Activated naive CD4-positive, alpha-beta T cell treated with anti-CD3 and anti-CD28 coated beads for 36 hours (primary cell): ENCODE measurements at regions of chr22 and their contacts with region 1.

Region 1: GRCh38 chr22:18077639-18078328 is at the start of gene PEX26:
- DNase-seq: peak; percentile 97
- H3K4me3 Mint-ChIP-seq: peak within 1 kb of the TSS; percentile 99
- H3K27ac Mint-ChIP-seq: peak within 1 kb of the TSS; percentile 99
- H3K4me1 Mint-ChIP-seq: peaks cover 47% of the 10 kb centered on the region
- H3K27me3 Mint-ChIP-seq: no peaks in the 10 kb centered on the region
- total RNA-seq, gene PEX26: 47.6 to 48.2 TPM

Region 2: DNA sequence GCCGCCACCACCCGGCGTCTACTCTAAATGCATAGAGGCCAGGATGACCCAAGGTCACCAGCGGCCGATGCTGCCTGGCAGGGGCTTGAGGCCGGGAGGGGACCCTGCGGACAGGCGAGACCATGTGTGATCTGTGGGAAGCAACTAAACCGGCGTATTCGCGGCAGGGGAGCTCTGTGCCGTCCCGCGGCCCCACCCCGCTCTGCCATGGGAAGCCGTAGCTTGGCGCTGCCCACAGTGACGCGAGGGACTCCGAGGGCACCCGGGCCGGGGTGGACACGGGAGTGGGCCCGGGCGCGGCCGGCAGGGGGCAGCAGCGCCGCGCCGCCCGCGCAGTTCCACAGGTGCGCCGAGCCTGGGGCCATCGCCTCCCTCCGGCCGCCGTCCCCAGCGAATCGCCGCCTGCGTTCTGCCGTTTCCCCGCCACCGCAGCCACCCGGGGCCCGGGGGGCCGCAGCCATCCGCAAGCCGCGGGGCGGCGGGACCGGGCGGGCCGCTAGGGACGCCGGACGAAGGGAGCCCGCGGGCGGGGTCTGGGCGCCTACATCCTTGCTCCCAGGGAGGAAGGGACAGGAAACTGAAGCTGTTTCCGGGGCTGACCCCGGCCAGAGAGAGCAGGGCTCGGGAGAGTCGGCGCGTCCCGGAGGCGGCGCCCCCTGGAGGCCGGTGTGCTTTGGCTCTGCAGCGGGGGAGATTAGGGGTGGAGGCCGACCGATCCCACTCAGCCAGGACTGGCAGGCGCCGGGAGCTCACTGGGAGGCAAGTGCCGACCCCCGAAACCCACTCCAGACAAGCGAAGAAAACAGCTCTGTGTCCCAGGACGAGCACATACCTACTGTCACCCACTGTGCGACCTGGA is 906.2 kb before region 1 on chr22:
- CTCF ChIA-PET with region 1: no interaction called
- intact Hi-C with region 1: loop called (anchors 2 kb)
- DNase-seq: peak; percentile 83
- H3K4me3 Mint-ChIP-seq: peak overlapping the region; percentile 78
- H3K27ac Mint-ChIP-seq: peak overlapping the region; percentile 44
- H3K4me1 Mint-ChIP-seq: peaks cover 5% of the 10 kb centered on the region
- H3K27me3 Mint-ChIP-seq: no peaks in the 10 kb centered on the region

Region 3: GRCh38 chr22:17742527-17742902 is 335.3 kb before region 1 on chr22:
- CTCF ChIA-PET with region 1: interaction called, 9 read pairs
- intact Hi-C with region 1: loop called (anchors 1 kb)
- DNase-seq: peak; percentile 79
- H3K4me3 Mint-ChIP-seq: no peak overlapping the region
- H3K27ac Mint-ChIP-seq: no peak overlapping the region
- H3K4me1 Mint-ChIP-seq: peaks cover 4% of the 10 kb centered on the region
- H3K27me3 Mint-ChIP-seq: no peaks in the 10 kb centered on the region

Region 4: DNA sequence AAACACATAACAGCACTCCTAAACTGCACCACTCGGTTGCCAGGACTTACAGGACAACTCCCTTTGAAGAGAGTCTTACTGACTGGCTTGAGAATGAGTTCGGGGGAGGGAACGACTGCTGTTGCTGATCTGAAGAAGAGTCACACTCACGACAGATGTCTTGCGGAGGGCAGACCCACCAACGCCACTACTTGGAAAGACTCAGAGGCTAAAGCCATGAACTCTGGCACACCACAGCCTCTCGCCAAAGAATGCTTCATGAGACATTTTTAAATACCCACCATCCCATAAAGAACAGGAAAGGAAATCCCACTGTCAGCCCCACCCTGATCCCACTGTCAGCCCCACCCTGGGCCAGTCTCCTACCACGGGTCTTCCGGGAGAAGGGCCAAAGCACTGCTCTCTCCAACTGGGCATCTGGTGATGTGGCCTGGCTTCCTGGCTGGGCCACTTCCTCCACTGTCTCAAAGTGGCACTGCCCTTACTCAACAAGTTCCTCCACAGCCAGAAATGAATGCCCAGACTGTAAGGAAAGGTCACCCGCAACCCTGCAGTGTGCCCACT is 127.1 kb before region 1 on chr22:
- CTCF ChIA-PET with region 1: no interaction called
- intact Hi-C with region 1: no loop called
- DNase-seq: no peak
- H3K4me3 Mint-ChIP-seq: no peak overlapping the region
- H3K27ac Mint-ChIP-seq: no peak overlapping the region
- H3K4me1 Mint-ChIP-seq: no peaks in the 10 kb centered on the region
- H3K27me3 Mint-ChIP-seq: no peaks in the 10 kb centered on the region

Region 5: GRCh38 chr22:18001040-18001893 is 76.5 kb before region 1 on chr22:
- CTCF ChIA-PET with region 1: interaction called, 7 read pairs
- intact Hi-C with region 1: loop called (anchors 1 kb)
- DNase-seq: peak; percentile 77
- H3K4me3 Mint-ChIP-seq: peak overlapping the region; percentile 91
- H3K27ac Mint-ChIP-seq: peak overlapping the region; percentile 93
- H3K4me1 Mint-ChIP-seq: peaks cover 43% of the 10 kb centered on the region
- H3K27me3 Mint-ChIP-seq: peaks cover 5% of the 10 kb centered on the region

Region 6: DNA sequence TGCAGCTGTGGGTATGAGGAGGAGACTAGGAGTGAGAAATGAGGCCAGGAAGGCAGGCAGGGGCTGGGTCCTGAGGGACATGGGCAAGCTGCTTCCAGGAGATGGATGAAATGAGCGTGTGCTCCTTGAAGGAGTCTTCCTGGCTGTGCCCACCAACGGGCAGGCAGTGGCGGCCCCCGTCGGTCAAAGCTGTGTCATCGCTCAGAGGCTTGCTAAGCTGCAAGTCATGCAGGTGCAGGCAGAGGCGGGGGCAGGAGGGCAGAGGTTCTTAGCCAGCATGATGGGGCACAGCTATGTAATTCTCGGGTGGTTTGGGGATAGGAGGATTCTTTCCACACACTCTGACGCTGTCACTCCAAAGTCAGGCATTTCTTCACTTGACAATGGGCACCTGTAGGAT is 12.5 kb before region 1 on chr22:
- CTCF ChIA-PET with region 1: interaction called, 12 read pairs
- intact Hi-C with region 1: no loop called
- DNase-seq: no peak
- H3K4me3 Mint-ChIP-seq: no peak overlapping the region
- H3K27ac Mint-ChIP-seq: no peak overlapping the region
- H3K4me1 Mint-ChIP-seq: no peaks in the 10 kb centered on the region
- H3K27me3 Mint-ChIP-seq: peaks cover 23% of the 10 kb centered on the region